ENCODE measurements at regions of chr5 and their contacts with region 1.

Region 1: GRCh38 chr5:150615141-150615699 is 25.2 kb upstream of the SYNPO start:
- DNase-seq: peak in 1 of 2 experiments; percentile 19
- H3K4me3 ChIP-seq: no peak overlapping the region
- H3K27ac ChIP-seq: no peak overlapping the region
- H3K4me1 ChIP-seq: peaks cover 42% of the 10 kb centered on the region
- H3K27me3 ChIP-seq: peaks cover 19% of the 10 kb centered on the region
- CTCF ChIP-seq: no peak

Region 2: DNA sequence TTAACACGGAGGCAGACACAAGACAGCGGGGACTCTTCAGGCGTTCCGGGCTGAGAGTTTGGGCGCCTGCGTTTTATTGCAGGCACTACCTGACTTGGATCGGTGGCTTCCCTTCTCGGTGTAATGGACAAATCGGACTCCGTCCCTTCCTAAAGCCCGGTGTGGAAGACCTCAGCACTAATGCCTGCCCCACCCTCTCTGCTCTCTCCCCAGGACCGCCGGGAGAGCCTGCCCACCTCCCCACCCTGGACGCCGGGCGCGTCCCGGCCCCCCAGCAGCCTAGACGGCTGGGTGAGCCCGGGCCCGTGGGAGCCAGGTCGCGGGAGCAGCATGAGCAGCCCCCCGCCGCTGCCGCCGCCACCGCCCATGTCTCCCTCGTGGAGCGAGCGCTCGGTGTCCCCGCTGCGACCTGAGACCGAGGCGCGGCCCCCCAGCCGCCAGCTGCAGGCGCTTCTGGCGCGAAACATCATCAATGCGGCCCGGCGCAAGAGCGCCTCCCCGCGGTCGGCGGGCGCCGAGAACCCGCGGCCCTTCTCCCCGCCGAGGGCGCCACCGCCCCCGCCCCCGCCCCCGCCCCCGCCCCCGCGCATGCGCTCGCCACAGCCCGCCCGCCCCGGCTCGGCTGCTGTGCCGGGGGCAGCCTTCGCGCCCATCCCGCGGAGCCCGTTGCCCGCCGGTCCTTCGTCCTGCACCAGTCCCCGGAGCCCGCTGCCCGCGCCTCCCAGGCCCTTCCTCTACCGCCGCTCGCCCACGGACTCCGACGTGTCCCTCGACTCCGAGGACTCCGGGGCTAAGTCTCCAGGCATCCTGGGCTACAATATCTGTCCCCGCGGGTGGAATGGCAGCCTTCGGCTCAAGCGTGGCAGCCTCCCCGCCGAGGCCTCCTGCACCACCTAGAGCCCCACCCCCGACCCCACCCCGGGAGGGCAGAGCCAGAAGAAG is 41.2 kb after region 1 on chr5:
- CTCF ChIA-PET with region 1: no interaction called
- POLR2A ChIA-PET with region 1: no interaction called
- intact Hi-C with region 1: loop called (anchors 5 kb)
- DNase-seq: peak in 1 of 2 experiments; percentile 80
- H3K4me3 ChIP-seq: peak overlapping the region; percentile 58; the same call in 1 of the 2 replicates
- H3K27ac ChIP-seq: no peak overlapping the region
- H3K4me1 ChIP-seq: 0 out of 2 replicates have a peak, but pooled peaks cover 3% of the 10 kb centered on the region
- H3K27me3 ChIP-seq: peaks cover 4% of the 10 kb centered on the region; the same call in 1 of the 2 replicates
- CTCF ChIP-seq: peak; percentile 65

Measured in PC-9 (cell line).